ENCODE measurements at regions of chr9 and their contacts with region 1.

Region 1: GRCh38 chr9:7656636-7657035 is 142.9 kb downstream of the DMAC1 start:
- DNase-seq: no peak
- ATAC-seq: no peak
- H3K4me3 ChIP-seq: no peak overlapping the region
- H3K4me3 Mint-ChIP-seq: no peak overlapping the region
- H3K27ac ChIP-seq: no peak overlapping the region
- H3K27ac Mint-ChIP-seq: no peak overlapping the region
- H3K4me1 ChIP-seq: peaks cover 0 to 4% of the 10 kb centered on the region in 2 experiments
- H3K4me1 Mint-ChIP-seq: peaks cover 5 to 18% (median 7%) of the 10 kb centered on the region in 3 donors
- H3K27me3 ChIP-seq: no peaks in the 10 kb centered on the region
- H3K27me3 Mint-ChIP-seq: no peaks in the 10 kb centered on the region

Region 2: DNA sequence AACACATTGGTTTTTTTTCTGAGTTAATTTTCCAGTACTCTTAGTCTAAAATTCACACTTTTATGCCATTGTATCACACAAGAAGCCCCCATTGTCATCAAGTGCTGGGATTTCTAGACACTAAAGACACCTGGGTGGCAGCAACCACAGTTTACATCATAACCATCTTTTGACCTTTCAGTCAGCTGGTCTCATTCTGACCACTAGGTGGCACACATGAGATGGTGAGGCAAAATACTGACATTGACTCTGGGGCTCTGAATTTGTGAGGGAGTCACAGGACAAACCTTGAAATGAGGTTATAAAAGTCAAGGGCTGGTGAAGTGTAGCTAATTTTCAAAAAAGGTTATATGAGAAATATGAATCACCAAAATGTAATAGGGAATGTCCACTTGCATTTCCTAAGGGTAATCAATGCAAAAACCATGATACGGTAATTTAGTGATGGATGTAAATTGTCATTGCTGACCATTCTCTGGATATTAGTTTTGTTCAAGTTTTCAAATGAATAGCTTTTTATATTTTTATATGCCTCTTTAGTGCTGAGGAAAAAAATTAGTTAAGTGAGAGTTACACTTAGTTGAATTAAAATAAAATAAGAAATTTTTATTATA is 86.4 kb before region 1 on chr9:
- CTCF ChIA-PET with region 1: interaction called, 9 to 17 read pairs
- POLR2A ChIA-PET with region 1: interaction called in 1 of 2 experiments, 4 read pairs
- DNase-seq: peak; percentile 10 to 80 (median 49)
- ATAC-seq: peak in 3 of 4 experiments; percentile 70 to 75 (median 73)
- H3K4me3 ChIP-seq: no peak overlapping the region
- H3K4me3 Mint-ChIP-seq: no peak overlapping the region
- H3K27ac ChIP-seq: no peak overlapping the region
- H3K27ac Mint-ChIP-seq: no peak overlapping the region
- H3K4me1 ChIP-seq: no peaks in the 10 kb centered on the region
- H3K4me1 Mint-ChIP-seq: no peaks in the 10 kb centered on the region
- H3K27me3 ChIP-seq: no peaks in the 10 kb centered on the region
- H3K27me3 Mint-ChIP-seq: peaks cover 9 to 20% of the 10 kb centered on the region in 2 donors

Measured in T-cell (primary cell).